ENCODE measurements at regions of chr17 and their contacts with region 1.

Region 1: GRCh38 chr17:8138672-8139371 is 13.4 kb downstream of the PER1 start:
- DNase-seq: peak; percentile 98
- H3K4me3 ChIP-seq: peak overlapping the region; percentile 26 to 89 (median 80)
- H3K27ac ChIP-seq: peak overlapping the region; percentile 88
- H3K4me1 ChIP-seq: peaks cover 14% of the 10 kb centered on the region
- H3K27me3 ChIP-seq: no peaks in the 10 kb centered on the region
- CTCF ChIP-seq: peak; percentile 83 to 91
- POLR2A ChIP-seq: no peak

Region 2: GRCh38 chr17:8125157-8125946 is 13.5 kb before region 1 on chr17:
- CTCF ChIA-PET with region 1: interaction called, 19 read pairs
- POLR2A ChIA-PET with region 1: interaction called, 6 read pairs
- dilution Hi-C with region 1: no loop called
- intact Hi-C with region 1: loop called (anchors 1 kb)
- DNase-seq: peak; percentile 71
- H3K4me3 ChIP-seq: peak overlapping the region; percentile 46 to 98 (median 85)
- H3K27ac ChIP-seq: no peak overlapping the region
- H3K4me1 ChIP-seq: peaks cover 30% of the 10 kb centered on the region
- H3K27me3 ChIP-seq: peaks cover 8 to 14% of the 10 kb centered on the region in 2 experiments
- CTCF ChIP-seq: no peak
- POLR2A ChIP-seq: no peak

Region 3: DNA sequence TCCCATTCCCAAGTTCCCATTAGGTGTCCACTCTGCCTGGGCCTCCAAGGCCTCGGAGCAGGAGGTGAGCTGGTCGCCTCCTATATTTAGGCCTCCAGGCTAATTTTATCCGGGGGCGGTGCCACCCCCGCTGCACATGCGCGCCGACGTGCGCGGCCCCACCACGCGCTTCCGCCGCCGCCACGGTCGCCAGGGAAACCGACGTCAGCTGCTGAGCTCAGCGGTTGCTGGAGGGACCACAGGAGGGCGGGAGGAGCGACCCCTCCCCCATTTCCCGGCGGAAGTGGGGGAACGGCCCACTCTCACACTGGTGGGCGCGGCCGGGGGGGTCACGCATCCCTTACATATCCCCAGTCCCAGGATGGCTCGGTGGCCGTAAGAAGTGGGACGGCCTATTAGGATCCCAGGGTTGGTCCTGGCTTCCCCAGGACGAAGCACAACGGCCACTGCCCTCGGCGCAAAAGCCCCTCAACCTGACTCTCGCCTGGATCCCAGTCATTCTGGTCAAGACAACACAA is 12.4 kb after region 1 on chr17:
- CTCF ChIA-PET with region 1: interaction called, 72 read pairs
- POLR2A ChIA-PET with region 1: interaction called, 5 read pairs
- dilution Hi-C with region 1: no loop called
- intact Hi-C with region 1: loop called (anchors 1 kb)
- DNase-seq: peak; percentile 92
- H3K4me3 ChIP-seq: peak overlapping the region; percentile 67 to 83 (median 69)
- H3K27ac ChIP-seq: peak overlapping the region; percentile 99
- H3K4me1 ChIP-seq: peaks cover 43% of the 10 kb centered on the region
- H3K27me3 ChIP-seq: no peaks in the 10 kb centered on the region
- CTCF ChIP-seq: no peak
- POLR2A ChIP-seq: no peak

Region 4: DNA sequence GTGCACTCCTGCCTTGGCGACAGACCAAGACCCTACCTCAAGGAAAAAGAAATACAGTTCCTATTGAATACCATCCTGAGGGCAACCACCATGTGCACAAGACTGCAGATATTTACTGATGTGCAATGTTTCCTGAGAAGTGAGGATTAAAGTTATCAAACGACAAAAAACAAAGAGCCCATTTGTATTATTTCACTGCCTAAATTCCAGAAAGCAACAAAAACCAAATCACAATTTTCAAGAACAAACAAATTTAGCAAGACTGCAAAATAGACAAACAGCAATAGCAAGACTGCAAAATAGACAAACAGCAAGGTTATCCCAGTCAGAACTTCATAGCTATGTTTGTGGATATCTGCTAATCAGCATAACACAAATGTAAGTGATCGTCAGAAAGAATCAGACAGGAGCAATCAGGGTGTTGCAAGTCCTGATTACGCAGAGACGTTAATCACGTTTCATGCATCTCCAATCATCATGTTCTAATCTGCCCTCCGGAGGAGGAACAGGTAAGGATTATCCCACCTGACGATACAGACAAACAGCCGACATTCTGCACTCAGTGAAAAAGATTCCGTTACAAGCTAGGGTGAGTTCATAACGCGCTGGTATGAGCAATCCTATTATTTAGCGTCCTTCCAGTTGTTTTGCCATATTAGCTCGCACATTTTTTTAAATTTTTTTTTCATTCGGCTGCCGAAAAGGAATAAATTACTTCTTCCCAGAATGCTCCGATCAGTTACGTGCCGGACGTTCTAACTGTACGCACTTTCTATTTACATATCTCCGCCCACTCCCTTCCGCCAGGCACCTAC is 34.4 kb after region 1 on chr17:
- CTCF ChIA-PET with region 1: no interaction called
- POLR2A ChIA-PET with region 1: interaction called, 4 read pairs
- dilution Hi-C with region 1: no loop called
- intact Hi-C with region 1: loop called (anchors 1 kb)
- DNase-seq: peak; percentile 95
- H3K4me3 ChIP-seq: peak overlapping the region in 2 of 3 experiments; percentile 37 to 68
- H3K27ac ChIP-seq: peak overlapping the region; percentile 95
- H3K4me1 ChIP-seq: peaks cover 23% of the 10 kb centered on the region
- H3K27me3 ChIP-seq: no peaks in the 10 kb centered on the region
- CTCF ChIP-seq: no peak
- POLR2A ChIP-seq: peak; percentile 100

Region 5: DNA sequence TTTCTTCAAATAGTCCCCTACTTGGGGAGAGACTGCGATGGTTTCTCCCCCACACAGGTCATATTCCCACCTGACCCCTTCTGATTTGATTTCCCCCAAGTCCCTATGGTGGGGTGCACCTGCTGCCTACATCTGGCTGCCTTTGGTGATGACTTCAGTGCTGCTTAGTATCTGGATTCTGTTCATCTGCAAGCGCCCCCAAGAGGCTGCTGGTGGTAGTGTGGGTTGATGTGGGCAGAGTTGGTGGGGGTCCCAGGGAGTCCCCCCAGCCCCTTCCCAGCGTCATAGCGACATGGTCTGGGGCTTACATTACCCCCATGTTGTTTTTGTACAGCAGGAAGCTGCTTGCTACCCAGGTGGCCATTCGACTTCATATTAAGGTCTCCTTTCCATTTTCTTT is 981.6 kb after region 1 on chr17:
- CTCF ChIA-PET with region 1: no interaction called
- POLR2A ChIA-PET with region 1: no interaction called
- dilution Hi-C with region 1: no loop called
- intact Hi-C with region 1: no loop called
- DNase-seq: no peak
- H3K4me3 ChIP-seq: no peak overlapping the region
- H3K27ac ChIP-seq: no peak overlapping the region
- H3K4me1 ChIP-seq: no peaks in the 10 kb centered on the region
- H3K27me3 ChIP-seq: no peaks in the 10 kb centered on the region
- CTCF ChIP-seq: no peak
- POLR2A ChIP-seq: no peak